ENCODE measurements at regions of chr11 and their contacts with region 1.

Region 1: DNA sequence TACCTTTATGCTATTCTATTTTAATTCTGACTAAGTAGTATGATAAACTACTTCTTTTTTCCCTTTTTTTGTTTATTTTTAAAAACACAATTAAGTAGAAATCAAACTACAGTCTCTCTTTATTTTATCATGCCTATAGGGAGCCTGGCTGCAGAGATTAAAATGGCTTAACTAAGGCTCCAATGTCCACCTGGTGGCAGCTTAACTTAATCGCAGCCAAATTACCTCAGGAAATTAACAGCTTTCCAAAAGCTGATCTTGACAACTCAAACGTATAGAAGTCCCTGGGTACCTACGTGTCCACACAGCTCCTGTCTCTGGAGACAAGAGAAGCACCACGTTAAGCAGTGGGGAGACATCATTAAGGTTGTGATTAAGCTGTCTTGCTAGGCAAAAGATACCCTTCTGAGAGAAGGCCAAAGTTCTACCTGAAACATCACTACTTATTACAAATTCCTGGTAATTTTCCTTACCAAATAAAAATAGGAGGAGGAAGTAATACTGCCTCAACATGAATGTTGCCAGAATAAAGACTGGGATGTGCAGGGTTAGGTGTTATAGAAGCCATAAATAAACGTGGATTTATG is 63.2 kb upstream of the SNX19 start:
- DNase-seq: no peak
- H3K4me3 ChIP-seq: no peak overlapping the region
- H3K27me3 ChIP-seq: peaks cover 5% of the 10 kb centered on the region; the same call in 1 of the 2 replicates
- CTCF ChIP-seq: peak; percentile 60

Region 2: GRCh38 chr11:130916238-130916855 is 63.1 kb before region 1 on chr11 and contains the start of gene SNX19:
- CTCF ChIA-PET with region 1: interaction called, 16 read pairs
- POLR2A ChIA-PET with region 1: no interaction called
- DNase-seq: peak; percentile 44
- H3K4me3 ChIP-seq: peak within 1 kb of the TSS; percentile 85
- H3K27me3 ChIP-seq: no peaks in the 10 kb centered on the region
- CTCF ChIP-seq: peak; percentile 75
- polyA plus RNA-seq, gene SNX19: 85.4 and 99.9 TPM in 2 replicates

Region 3: DNA sequence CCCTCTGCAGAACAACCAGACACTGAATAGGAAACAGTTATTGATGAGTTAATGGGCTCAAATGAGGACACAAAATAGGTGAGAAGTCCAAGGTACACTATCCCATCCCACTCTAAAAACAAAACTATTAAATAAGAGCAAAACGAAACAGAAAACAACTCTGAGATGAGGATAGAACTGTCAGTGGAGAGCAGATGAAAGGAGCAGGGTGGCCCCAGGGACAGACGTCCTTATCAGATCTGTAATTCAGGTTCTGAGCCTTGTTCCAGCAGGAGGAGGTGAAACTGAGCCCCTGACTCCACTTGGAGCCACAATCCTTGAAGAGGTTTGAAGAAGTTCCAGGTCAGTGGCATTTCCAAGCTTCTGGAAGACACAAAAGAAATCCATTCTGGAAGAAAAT is 54.7 kb before region 1 on chr11:
- CTCF ChIA-PET with region 1: interaction called, 14 read pairs
- POLR2A ChIA-PET with region 1: no interaction called
- DNase-seq: no peak
- H3K4me3 ChIP-seq: no peak overlapping the region
- H3K27me3 ChIP-seq: peaks cover 4% of the 10 kb centered on the region; the same call in 1 of the 2 replicates
- CTCF ChIP-seq: no peak

Region 4: DNA sequence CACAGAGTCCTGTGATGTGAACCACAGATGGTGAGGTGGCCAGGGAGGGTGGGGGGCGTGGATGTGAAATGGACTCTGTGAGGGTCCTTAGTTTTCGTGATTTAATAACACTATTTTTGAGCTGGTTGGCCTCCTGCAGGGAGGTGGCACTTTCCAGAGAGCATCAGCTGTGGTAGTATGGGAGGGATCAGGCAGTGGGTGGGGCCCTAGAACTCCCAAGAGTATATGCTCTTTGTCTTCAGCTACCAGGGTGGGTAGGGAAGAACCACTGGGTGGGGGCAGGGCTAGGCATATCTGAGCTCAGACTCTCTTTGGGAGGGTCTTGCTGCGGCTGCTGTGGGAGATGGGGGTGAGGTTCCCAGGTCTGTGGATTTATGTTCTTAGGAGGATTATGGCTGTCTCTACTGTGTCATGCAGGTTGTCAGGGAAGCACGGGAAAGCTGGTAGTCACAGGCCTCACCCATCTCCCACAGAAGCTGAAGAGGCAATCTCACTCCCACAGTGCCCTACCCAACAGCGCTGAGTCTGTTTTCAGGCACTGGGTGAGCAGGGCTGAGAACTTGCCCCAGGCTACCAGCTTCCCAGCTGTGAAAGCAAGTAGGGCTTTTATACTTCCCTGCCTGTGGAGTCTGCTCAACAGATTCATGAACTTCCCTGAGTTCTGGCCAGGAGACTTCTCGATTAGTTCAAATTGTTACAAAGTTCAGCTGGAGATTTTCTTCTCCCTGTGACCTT is 15.3 kb before region 1 on chr11:
- CTCF ChIA-PET with region 1: interaction called, 3 read pairs
- POLR2A ChIA-PET with region 1: interaction called, 14 read pairs
- DNase-seq: no peak
- H3K4me3 ChIP-seq: no peak overlapping the region
- H3K27me3 ChIP-seq: peaks cover 6% of the 10 kb centered on the region
- CTCF ChIP-seq: no peak

Region 5: DNA sequence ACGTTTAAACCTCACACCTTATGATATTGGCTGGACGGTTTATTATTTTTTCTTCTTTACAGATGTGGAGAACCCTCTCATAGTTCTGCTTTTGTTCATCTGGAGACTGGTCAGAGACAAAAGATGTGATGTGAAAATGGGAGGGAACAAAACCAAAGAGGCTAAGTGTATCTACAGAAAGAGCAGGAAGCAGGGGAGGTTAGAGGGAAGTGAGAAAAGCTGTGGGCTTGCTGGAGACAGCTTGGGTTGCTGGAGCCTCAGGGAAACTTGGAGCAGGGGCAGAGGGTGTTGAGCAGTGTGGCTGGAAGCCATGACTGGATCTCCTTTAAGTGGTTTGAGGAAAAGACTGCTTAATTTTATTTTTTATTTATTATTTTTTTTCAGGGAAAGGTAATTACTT is 15.8 kb after region 1 on chr11:
- CTCF ChIA-PET with region 1: interaction called, 11 read pairs
- POLR2A ChIA-PET with region 1: no interaction called
- DNase-seq: no peak
- H3K4me3 ChIP-seq: no peak overlapping the region
- H3K27me3 ChIP-seq: no peaks in the 10 kb centered on the region
- CTCF ChIP-seq: no peak

Region 6: DNA sequence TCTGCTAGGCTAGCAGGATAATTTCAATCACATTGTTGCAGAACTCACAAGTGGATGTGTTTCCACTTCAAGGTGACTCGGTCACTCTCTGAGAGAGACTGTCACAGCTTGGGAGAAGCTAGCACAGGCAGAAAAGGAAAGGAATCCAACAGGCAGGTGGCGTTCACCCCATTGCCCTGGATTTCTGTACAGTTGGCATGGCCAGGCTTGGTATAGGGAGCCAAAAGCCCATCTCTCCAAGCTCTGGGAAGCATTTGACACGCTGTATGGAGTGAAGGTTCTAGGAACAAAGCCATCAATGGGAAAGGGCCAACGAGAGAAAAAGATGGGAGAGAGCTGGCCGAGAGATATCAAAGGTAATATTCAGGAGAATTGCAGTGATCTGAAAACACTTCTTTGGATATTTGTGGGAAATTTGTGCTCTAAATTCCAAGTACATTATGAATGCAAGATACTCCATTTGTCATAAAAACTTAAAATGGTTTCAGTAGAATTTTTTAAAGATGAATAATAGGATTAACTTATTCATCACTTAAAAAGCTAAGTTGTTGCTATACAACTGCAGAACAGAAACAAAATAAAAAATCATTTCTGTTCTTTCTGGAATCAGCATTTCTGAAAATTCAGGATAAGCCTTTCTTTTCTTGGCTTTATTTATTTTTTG is 167.5 kb after region 1 on chr11:
- CTCF ChIA-PET with region 1: no interaction called
- POLR2A ChIA-PET with region 1: no interaction called
- DNase-seq: peak; percentile 9
- H3K4me3 ChIP-seq: no peak overlapping the region
- H3K27me3 ChIP-seq: no peaks in the 10 kb centered on the region
- CTCF ChIP-seq: no peak